ENCODE measurements at regions of chr4 and their contacts with region 1.

Region 1: GRCh38 chr4:46844325-46844917 is 64.6 kb downstream of the COX7B2 start:
- DNase-seq: no peak
- ATAC-seq: no peak
- H3K4me3 Mint-ChIP-seq: no peak overlapping the region
- H3K27ac Mint-ChIP-seq: no peak overlapping the region
- H3K4me1 Mint-ChIP-seq: no peaks in the 10 kb centered on the region
- H3K27me3 Mint-ChIP-seq: no peaks in the 10 kb centered on the region
- CTCF ChIP-seq: peak; percentile 61

Region 2: GRCh38 chr4:47088298-47088697 is 243.9 kb after region 1 on chr4:
- CTCF ChIA-PET with region 1: no interaction called
- POLR2A ChIA-PET with region 1: no interaction called
- intact Hi-C with region 1: no loop called
- DNase-seq: no peak
- ATAC-seq: no peak
- H3K4me3 Mint-ChIP-seq: no peak overlapping the region
- H3K27ac Mint-ChIP-seq: no peak overlapping the region
- H3K4me1 Mint-ChIP-seq: no peaks in the 10 kb centered on the region
- H3K27me3 Mint-ChIP-seq: no peaks in the 10 kb centered on the region
- CTCF ChIP-seq: no peak

Region 3: GRCh38 chr4:47122592-47123291 is 278.3 kb after region 1 on chr4:
- CTCF ChIA-PET with region 1: no interaction called
- POLR2A ChIA-PET with region 1: no interaction called
- intact Hi-C with region 1: loop called (anchors 2 kb)
- DNase-seq: no peak
- ATAC-seq: peak; percentile 34
- H3K4me3 Mint-ChIP-seq: no peak overlapping the region
- H3K27ac Mint-ChIP-seq: no peak overlapping the region
- H3K4me1 Mint-ChIP-seq: no peaks in the 10 kb centered on the region
- H3K27me3 Mint-ChIP-seq: no peaks in the 10 kb centered on the region
- CTCF ChIP-seq: peak; percentile 65

Measured in activated B cell treated with CpG ODN at 0.5 μM for 24 hours (primary cell).